ENCODE measurements at regions of chr6 and their contacts with region 1.

Region 1: GRCh38 chr6:43951063-43951755 is 176.0 kb downstream of the MRPL14 start:
- DNase-seq: peak in 1 of 2 donors; percentile 64
- ATAC-seq: no peak
- H3K4me3 ChIP-seq: no peak overlapping the region
- H3K27ac ChIP-seq: peak overlapping the region; percentile 85 to 97 (median 88)
- H3K4me1 ChIP-seq: peaks cover 14 to 21% of the 10 kb centered on the region in 2 donors
- H3K27me3 ChIP-seq: no peaks in the 10 kb centered on the region
- CTCF ChIP-seq: peak; percentile 31 to 64 (median 46)
- POLR2A ChIP-seq: no peak

Region 2: DNA sequence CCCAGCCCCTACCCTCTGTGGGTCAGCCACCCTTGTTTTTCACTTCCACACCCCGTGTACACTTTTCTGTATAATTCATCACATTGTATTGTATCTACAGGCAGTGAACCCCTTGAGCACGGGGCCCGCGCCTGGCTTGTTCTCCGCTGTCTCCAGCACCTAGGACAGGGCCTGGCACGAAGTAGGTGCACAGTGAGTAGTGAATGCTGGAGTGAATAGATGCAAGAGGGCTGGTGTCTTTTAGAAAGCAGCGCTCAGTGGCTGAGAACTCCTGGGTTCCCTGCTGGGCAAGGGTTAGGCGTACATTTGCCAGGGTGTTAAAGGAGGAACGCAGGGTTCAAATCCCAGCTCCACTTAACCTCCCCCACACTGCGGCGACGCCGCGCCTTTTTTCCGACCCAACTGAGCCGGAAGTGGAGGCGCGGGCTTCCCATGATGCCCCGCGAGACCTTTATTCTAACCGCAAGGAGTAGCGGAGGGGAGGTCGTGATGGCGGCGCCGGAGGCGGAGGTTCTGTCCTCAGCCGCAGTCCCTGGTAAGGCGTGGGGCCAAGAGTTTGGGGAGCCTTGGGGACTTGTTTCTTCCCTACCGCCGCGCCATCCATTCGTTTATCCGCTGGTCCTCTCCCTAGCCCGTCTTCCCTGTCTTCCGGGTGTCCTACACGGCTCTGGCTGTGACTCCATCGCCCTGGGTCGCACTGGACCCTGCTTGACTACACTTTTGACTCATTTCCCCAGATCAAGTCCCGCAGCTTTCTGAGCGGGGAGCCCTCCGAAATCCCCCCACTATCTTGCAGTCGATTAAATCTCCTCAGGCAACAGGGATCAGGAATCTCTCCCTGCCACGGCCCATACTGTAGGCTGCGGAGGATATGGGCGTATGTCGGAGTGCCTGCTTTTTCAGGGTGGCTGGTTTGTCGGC is 315.6 kb before region 1 on chr6 and contains the start of gene MAD2L1BP:
- in situ Hi-C with region 1: no loop called
- intact Hi-C with region 1: no loop called
- DNase-seq: peak; percentile 58 to 77
- ATAC-seq: peak; percentile 82
- H3K4me3 ChIP-seq: peak within 1 kb of the TSS; percentile 84 to 91 (median 88)
- H3K27ac ChIP-seq: peak within 1 kb of the TSS; percentile 86 to 93 (median 90)
- H3K4me1 ChIP-seq: peaks cover 32 to 36% of the 10 kb centered on the region in 2 donors
- H3K27me3 ChIP-seq: no peaks in the 10 kb centered on the region
- CTCF ChIP-seq: peak in 1 of 5 experiments; percentile 15
- POLR2A ChIP-seq: peak; percentile 85 to 87
- total RNA-seq, gene MAD2L1BP: 25.1 to 55.4 (median 25.2) TPM

Region 3: DNA sequence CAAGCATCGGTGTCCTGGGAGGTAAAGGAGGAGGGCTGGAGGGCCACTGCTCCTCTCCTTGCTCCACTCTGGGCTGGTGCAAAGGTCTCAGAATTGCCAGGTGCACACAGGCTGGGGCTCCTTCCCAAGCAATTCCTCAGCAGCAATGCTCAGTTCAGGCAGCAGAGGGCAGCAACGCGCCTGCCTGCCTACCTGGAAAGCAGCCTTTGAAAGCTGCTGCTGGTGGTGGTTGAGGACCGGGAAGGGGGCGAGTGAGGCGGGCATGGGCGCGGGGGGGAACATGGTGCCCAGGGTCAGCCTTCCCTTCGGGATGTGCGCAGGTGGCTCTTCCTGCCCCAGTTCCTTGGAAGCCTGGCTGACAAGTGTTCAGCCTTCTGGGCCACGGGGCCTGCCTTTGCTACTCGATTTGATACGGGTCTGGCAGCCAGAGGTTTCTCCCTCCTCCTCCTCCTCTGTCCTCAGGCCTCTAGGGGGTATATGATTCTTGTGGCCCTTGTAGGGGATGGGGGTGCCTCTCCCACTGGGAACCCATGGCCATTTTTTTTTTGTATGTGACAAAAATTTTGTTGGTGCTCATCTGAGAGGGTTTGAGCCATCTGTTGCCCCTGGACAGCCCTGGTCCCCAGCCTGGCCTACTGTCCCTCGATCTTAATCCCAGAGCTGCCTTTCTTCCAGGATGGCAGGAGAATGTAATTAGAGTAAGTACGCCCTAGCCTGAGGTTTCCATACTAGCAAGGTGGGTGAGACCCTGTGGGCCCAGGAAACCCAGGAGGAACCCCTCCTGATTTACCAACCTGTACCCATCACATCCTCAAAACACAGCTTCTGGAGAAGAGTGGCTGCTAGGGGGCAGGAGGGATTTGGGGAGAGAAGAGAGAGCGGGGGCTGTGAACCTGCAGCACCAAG is 283.7 kb before region 1 on chr6:
- in situ Hi-C with region 1: no loop called
- intact Hi-C with region 1: loop called (anchors 2 kb)
- DNase-seq: peak; percentile 62 to 85
- ATAC-seq: peak; percentile 67 to 69
- H3K4me3 ChIP-seq: peak overlapping the region in 3 of 4 donors; percentile 17 to 30 (median 18)
- H3K27ac ChIP-seq: peak overlapping the region; percentile 95 to 97 (median 96)
- H3K4me1 ChIP-seq: peaks cover 54 to 59% of the 10 kb centered on the region in 2 donors
- H3K27me3 ChIP-seq: no peaks in the 10 kb centered on the region
- CTCF ChIP-seq: peak; percentile 98
- POLR2A ChIP-seq: peak in 1 of 2 donors; percentile 34

Region 4: GRCh38 chr6:43798688-43799444 is 152.3 kb before region 1 on chr6:
- in situ Hi-C with region 1: no loop called
- intact Hi-C with region 1: loop called (anchors 5 kb)
- DNase-seq: peak; percentile 98 to 99
- ATAC-seq: peak; percentile 88 to 91
- H3K4me3 ChIP-seq: no peak overlapping the region
- H3K27ac ChIP-seq: peak overlapping the region; percentile 91 to 96 (median 92)
- H3K4me1 ChIP-seq: peaks cover 47 to 59% of the 10 kb centered on the region in 2 donors
- H3K27me3 ChIP-seq: no peaks in the 10 kb centered on the region
- CTCF ChIP-seq: peak in 1 of 5 experiments; percentile 34
- POLR2A ChIP-seq: peak; percentile 88 to 94

Region 5: DNA sequence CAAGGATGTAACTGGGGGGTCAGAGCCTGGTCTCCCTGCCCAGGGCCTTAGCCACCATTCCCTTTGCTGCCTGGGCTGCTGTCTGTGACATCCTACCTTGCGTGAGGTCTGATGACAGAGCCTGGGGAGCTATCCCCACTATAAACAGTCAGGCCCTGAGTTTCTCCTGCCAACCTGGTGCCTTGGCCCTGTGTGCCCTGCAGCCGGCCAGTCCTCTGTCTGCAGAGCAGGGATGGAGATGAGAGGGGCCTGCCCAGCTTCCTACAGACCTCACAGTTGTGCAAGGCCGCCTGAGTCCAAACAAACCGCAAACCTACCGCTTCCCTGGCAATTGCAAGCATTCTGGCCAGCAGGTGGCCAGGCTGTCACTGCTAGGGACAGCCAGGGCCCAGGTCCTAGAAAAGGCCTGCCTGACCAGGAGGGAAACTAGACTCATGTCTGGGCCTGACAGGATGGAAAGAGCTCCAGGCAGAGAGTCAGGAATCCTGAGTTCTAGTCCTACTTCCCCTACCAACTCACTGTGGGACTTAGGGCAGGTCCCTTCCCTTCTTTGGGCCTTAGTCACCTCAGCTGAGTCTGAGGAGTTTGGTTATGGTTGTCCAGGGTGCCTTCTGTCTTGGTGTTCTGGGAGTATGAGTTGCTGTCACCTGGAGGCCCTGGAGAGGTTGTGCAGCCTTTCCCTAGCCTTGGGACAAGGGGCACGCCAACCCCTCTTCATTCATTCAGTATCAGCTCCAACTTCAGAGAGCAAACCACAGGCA is 95.0 kb before region 1 on chr6:
- in situ Hi-C with region 1: no loop called
- intact Hi-C with region 1: loop called (anchors 2 kb)
- DNase-seq: peak; percentile 20 to 66
- ATAC-seq: peak; percentile 63 to 92
- H3K4me3 ChIP-seq: no peak overlapping the region
- H3K27ac ChIP-seq: peak overlapping the region; percentile 6 to 49 (median 23)
- H3K4me1 ChIP-seq: no peaks in the 10 kb centered on the region
- H3K27me3 ChIP-seq: no peaks in the 10 kb centered on the region
- CTCF ChIP-seq: peak; percentile 47 to 73 (median 65)
- POLR2A ChIP-seq: no peak

Region 6: DNA sequence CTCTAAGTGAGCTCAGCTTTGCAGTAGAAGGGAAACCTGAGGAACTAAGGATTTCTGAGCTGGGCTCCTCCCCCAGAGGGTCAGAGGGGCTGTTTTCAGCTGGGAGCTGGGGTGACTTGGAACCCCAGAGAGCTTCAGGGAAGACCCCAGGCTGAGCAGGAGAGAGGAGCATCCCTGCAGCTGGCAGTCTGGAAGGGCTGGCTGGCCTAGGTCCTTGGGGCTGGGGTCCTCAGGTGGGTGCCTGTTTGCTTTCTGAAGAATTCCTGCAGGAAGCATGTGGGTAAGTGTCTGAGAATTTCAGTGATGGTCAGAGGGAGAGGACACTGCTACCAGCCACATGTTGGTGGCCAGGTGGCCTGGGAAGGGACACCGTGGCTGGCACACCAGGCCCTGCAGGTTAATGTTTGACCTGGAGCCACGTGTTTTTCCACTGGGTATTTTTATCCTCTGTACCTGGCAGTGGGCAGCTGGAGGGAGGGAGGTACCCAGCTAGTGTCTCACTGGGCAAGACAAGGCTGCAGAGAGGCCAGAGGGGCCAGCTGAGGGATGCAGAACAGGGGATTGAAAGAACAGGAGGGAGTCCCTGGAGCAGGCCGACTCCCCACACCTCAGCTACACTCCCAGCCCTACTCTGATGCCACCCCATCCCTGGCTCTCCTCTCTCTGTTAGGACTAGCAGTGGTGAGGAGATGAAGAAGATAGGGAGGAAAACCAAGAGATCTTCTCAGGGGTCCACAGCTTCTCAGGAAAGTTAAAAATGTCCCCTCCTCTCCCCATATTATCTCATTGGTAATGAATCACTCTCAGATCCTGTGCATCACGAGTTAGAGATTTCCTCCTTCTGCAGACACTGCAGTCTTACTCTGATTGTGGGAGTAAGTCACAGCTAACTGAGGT is 37.6 kb before region 1 on chr6:
- in situ Hi-C with region 1: no loop called
- intact Hi-C with region 1: loop called (anchors 2 kb)
- DNase-seq: no peak
- ATAC-seq: no peak
- H3K4me3 ChIP-seq: no peak overlapping the region
- H3K27ac ChIP-seq: no peak overlapping the region
- H3K4me1 ChIP-seq: peaks cover 6 to 13% of the 10 kb centered on the region in 2 donors
- H3K27me3 ChIP-seq: no peaks in the 10 kb centered on the region
- CTCF ChIP-seq: no peak
- POLR2A ChIP-seq: no peak

Region 7: DNA sequence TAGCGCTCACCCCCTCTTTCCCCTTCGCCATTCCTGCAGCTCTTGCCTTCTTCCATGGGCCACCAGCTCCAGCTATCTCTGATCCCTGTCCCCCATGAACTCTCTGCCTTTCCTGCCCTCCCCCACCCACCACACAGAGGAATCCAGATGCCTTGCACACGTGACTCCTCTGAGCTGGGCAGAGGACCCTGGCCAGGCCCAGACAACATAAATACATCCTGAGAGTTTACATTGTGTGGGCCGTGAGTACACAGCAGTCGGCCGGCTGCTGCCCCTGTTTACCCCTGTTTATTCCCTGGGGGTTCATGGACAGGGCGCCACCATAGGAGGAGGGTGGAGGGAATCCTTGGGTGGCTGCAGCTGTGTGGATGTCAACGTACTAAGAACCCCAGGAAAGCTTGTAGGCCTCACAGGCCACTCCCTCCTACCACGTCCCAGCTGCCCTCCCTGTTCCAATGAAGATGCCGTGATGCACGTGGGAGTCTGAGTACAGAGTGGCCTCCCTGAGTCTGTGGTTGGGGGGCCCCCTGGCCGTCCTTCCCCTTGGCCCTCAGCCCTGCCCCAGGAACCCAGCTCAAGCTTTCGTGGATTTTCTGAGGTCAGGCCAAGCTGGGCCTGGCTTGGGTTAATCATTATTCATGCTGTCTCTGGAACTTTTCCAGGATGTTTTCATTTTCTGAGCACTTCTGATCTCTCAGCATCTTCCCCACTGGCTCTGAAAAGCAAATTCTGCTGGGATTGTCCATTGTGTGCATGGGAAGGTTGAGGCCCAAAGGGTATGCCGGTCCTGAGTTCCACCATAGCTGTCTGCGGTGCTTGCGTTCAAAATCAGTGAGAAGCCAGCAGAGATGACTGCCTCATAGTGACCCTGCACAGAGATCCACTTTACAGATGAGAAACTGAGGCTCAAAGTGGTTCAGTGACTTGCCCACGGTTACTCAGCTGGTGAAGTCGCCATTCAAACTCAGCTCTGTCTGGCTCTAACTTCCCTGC is 39.7 kb after region 1 on chr6:
- in situ Hi-C with region 1: no loop called
- intact Hi-C with region 1: loop called (anchors 1 kb)
- DNase-seq: peak in 1 of 2 donors; percentile 58
- ATAC-seq: no peak
- H3K4me3 ChIP-seq: no peak overlapping the region
- H3K27ac ChIP-seq: peak overlapping the region; percentile 90 to 100 (median 99)
- H3K4me1 ChIP-seq: peaks cover 54 to 64% of the 10 kb centered on the region in 2 donors
- H3K27me3 ChIP-seq: no peaks in the 10 kb centered on the region
- CTCF ChIP-seq: no peak
- POLR2A ChIP-seq: peak in 1 of 2 donors; percentile 6

Region 8: GRCh38 chr6:44002593-44003344 is 51.6 kb after region 1 on chr6:
- in situ Hi-C with region 1: no loop called
- intact Hi-C with region 1: loop called (anchors 2 kb)
- DNase-seq: peak; percentile 39 to 78
- ATAC-seq: peak; percentile 22 to 36
- H3K4me3 ChIP-seq: peak overlapping the region; percentile 36 to 49 (median 44)
- H3K27ac ChIP-seq: peak overlapping the region; percentile 83 to 93 (median 88)
- H3K4me1 ChIP-seq: peaks cover 36 to 45% of the 10 kb centered on the region in 2 donors
- H3K27me3 ChIP-seq: no peaks in the 10 kb centered on the region
- CTCF ChIP-seq: peak in 4 of 5 experiments; percentile 8 to 36 (median 29)
- POLR2A ChIP-seq: peak; percentile 63 to 70

Measured in gastrocnemius medialis (tissue), 4 donors.